ENCODE measurements at regions of chr3 and their contacts with region 1.

Region 1: GRCh38 chr3:173891272-173892100 is 493.9 kb downstream of the NLGN1 start:
- DNase-seq: no peak
- ATAC-seq: no peak
- H3K4me3 ChIP-seq: no peak overlapping the region
- H3K27ac ChIP-seq: no peak overlapping the region
- H3K4me1 ChIP-seq: no peaks in the 10 kb centered on the region
- H3K27me3 ChIP-seq: no peaks in the 10 kb centered on the region
- CTCF ChIP-seq: no peak

Region 2: DNA sequence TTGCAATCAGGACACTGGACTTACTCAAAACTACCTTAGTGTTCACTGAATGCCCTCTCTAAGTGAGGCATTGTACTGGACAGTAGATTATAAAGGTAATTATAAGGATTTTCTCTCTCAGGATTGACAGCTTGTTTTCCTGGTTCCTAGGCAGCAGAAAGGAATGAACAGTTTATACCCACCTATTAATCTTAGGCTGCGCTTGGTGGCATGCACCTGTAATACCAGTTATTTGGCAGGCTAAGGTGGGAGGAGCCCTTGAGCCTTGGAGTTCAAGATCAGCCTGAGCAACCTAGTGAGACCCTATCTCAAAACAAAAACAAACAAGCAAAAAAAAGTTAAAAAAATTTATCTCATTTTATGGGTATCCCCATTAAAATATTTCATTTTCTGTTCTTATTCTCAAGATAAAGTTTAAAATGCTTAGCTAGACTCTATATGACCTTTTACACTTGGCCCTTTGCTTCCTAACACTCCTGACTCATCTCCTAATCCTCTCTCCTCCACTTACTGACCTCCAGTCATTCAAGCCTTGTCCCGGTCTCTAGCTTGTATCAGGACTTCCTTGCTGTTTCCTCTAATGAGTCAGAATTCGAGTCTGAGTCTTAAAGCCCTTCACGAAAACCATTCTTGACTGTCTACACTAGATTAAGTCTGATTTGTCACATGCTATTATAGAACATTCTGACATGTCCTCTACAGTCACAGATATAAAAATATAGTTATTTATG is 145.4 kb before region 1 on chr3:
- CTCF ChIA-PET with region 1: no interaction called
- POLR2A ChIA-PET with region 1: no interaction called
- in situ Hi-C with region 1: no loop called
- intact Hi-C with region 1: no loop called
- DNase-seq: no peak
- ATAC-seq: no peak
- H3K4me3 ChIP-seq: no peak overlapping the region
- H3K27ac ChIP-seq: no peak overlapping the region
- H3K4me1 ChIP-seq: no peaks in the 10 kb centered on the region
- H3K27me3 ChIP-seq: no peaks in the 10 kb centered on the region
- CTCF ChIP-seq: no peak

Region 3: DNA sequence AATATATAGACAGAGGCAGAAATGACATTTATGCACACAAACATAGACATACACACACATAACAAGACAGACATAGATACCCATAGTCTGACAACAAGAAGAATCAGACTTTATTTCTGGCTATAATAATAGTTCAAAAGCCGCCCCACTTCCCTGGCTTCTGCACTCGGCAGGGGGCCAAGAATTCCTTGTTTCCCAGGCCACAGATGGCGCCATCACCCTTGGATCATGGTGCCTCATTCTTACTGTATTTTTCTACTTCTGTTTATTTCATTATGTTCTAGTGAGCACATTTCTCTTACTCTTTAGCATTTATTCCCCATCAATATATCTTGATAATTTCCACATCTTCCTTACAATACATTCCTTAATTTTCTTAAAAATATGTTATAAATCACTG is 106.5 kb before region 1 on chr3:
- CTCF ChIA-PET with region 1: no interaction called
- POLR2A ChIA-PET with region 1: no interaction called
- in situ Hi-C with region 1: no loop called
- intact Hi-C with region 1: no loop called
- DNase-seq: no peak
- ATAC-seq: no peak
- H3K4me3 ChIP-seq: no peak overlapping the region
- H3K27ac ChIP-seq: no peak overlapping the region
- H3K4me1 ChIP-seq: no peaks in the 10 kb centered on the region
- H3K27me3 ChIP-seq: no peaks in the 10 kb centered on the region
- CTCF ChIP-seq: no peak

Region 4: DNA sequence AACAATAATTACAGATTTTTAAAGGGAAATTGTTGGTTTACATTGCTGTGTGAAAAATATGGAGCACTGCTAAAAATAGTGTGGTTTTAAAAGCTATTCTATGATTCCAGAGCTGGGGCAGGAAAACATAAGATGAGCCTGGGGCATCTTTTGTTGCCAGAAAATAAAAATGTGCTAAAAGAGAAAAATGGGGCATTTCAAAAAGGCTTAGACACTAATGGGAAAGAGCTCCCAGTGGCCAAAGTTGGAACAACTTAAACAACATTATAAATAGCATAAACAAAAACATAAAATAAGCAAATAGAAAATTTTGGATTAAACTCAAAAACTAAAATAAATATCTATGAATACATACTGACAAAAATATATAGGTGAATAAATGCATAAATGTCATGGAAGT is 15.0 kb before region 1 on chr3:
- CTCF ChIA-PET with region 1: interaction called, 11 read pairs
- POLR2A ChIA-PET with region 1: no interaction called
- in situ Hi-C with region 1: no loop called
- intact Hi-C with region 1: no loop called
- DNase-seq: no peak
- ATAC-seq: no peak
- H3K4me3 ChIP-seq: no peak overlapping the region
- H3K27ac ChIP-seq: no peak overlapping the region
- H3K4me1 ChIP-seq: no peaks in the 10 kb centered on the region
- H3K27me3 ChIP-seq: no peaks in the 10 kb centered on the region
- CTCF ChIP-seq: peak; percentile 16; the same call in 1 of the 2 replicates